ENCODE measurements at regions of chr6 and their contacts with region 1.

Region 1: DNA sequence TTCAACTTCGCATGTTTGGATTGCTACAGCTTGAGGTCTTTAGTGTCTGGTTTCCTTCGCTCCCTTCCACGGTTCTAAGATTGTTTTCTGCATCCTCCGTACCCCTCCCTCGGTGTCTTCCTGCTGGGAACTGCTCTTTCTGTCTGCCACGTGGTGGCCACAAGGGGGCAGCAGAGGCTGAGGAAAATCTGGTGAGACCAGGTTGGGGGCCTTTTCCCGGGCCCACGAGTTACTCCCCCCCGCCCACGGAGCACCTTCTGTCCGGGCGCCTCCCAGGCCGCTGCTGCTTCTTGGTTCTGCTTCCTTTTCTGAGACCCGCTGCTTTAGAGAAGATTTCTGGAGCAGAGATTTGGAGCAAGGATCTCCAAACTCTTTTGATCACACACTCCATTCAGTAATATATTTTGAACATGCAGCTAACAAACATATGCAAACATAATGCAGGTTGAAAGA is 21.1 kb upstream of the NOTCH4 start:
- DNase-seq: peak; percentile 63
- ATAC-seq: peak; percentile 97
- H3K4me3 ChIP-seq: no peak overlapping the region
- H3K27ac ChIP-seq: no peak overlapping the region
- H3K4me1 ChIP-seq: no peaks in the 10 kb centered on the region
- H3K27me3 ChIP-seq: peaks cover 9% of the 10 kb centered on the region
- CTCF ChIP-seq: peak; percentile 80
- POLR2A ChIP-seq: no peak
- RAD21 ChIP-seq: peak; percentile 71

Region 2: GRCh38 chr6:32118782-32119628 is 126.0 kb before region 1 on chr6:
- CTCF ChIA-PET with region 1: no interaction called
- POLR2A ChIA-PET with region 1: no interaction called
- dilution Hi-C with region 1: no loop called
- in situ Hi-C with region 1: no loop called
- intact Hi-C with region 1: loop called (anchors 2 kb)
- DNase-seq: peak; percentile 85
- ATAC-seq: peak; percentile 78
- H3K4me3 ChIP-seq: no peak overlapping the region
- H3K27ac ChIP-seq: peak overlapping the region; percentile 36; the same call in 1 of the 2 replicates
- H3K4me1 ChIP-seq: peaks cover 11% of the 10 kb centered on the region
- H3K27me3 ChIP-seq: no peaks in the 10 kb centered on the region
- CTCF ChIP-seq: peak; percentile 98
- POLR2A ChIP-seq: peak; percentile 57; the same call in 1 of the 2 replicates
- RAD21 ChIP-seq: peak; percentile 98

Region 3: DNA sequence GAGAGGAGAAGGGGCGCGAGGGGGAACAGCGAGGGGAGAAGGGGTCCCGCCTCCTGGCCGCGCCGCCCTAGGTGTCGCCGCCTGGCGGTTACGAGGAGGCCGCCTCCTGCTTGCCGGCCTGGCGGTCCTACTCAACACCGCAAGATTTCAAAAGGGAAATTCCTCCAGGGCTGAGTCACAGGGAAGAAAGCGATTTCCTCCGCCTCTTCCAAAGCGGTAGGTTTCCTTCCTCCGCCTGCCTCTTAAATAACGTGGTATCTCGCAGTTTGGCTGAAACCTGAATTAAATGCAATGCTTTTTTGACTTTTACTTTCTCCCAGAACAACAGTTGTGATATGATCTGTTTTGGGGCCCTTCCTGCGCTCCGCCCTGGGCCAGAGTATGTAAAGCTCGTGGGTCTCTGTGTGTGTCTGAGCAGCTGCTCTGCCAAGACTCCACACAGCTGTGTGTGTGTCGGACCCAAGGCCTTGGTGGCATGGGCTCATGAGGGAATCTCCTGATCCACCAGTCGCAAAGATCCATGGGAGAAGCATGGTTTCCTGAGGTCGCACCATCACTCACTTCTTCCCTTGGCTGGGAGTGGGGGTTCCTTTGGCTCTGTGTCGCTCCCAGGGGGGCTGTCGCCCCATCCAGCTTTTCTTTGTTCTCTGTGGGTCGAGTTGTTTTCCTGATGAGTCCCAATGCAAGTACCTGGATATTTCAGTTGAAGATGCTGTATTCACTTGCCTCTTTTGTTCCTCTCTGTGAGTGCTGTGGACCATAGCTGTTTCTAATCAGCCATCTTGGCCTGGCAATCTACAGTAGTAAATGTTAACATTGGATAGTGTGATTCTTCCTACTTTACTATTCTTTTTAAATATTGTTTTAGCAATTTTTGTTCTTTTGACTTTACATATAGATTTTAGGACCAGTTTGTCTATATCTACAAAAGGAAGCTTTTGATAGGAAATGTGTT is 10.5 kb after region 1 on chr6:
- CTCF ChIA-PET with region 1: interaction called, 10 read pairs
- POLR2A ChIA-PET with region 1: no interaction called
- dilution Hi-C with region 1: no loop called
- in situ Hi-C with region 1: no loop called
- intact Hi-C with region 1: no loop called
- DNase-seq: peak; percentile 93
- ATAC-seq: peak; percentile 97
- H3K4me3 ChIP-seq: peak overlapping the region; percentile 20
- H3K27ac ChIP-seq: peak overlapping the region; percentile 81
- H3K4me1 ChIP-seq: peaks cover 4% of the 10 kb centered on the region
- H3K27me3 ChIP-seq: no peaks in the 10 kb centered on the region
- CTCF ChIP-seq: peak; percentile 62
- POLR2A ChIP-seq: 0 out of 2 replicates have a peak, but pooled peaks have one; percentile 25
- RAD21 ChIP-seq: peak; percentile 37; the same call in 1 of the 2 replicates

Region 4: DNA sequence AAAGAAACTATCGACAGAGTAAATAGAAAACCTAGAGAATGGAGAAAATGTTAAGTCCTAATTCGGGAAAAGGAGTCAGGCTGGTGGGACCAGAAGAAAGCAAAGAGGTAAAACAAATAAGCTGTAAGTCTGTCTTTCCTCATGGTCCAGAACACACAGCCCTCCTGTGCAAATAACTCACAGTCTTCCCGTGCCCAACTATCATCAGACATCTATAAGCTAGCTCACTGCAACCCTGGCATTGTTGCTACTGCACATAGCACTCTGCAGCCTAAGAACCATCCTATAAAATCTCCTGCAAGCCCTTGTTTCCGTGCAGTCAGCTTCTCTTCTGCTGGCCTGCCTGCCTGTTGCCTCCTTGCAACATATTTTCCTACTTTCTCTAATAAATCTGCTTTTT is 212.1 kb after region 1 on chr6:
- CTCF ChIA-PET with region 1: no interaction called
- POLR2A ChIA-PET with region 1: no interaction called
- dilution Hi-C with region 1: no loop called
- in situ Hi-C with region 1: no loop called
- intact Hi-C with region 1: no loop called
- DNase-seq: no peak
- ATAC-seq: no peak
- H3K4me3 ChIP-seq: no peak overlapping the region
- H3K27ac ChIP-seq: no peak overlapping the region
- H3K4me1 ChIP-seq: no peaks in the 10 kb centered on the region
- H3K27me3 ChIP-seq: no peaks in the 10 kb centered on the region
- CTCF ChIP-seq: no peak
- POLR2A ChIP-seq: no peak
- RAD21 ChIP-seq: no peak

Region 5: GRCh38 chr6:32692019-32692418 is 447.0 kb after region 1 on chr6:
- CTCF ChIA-PET with region 1: no interaction called
- POLR2A ChIA-PET with region 1: no interaction called
- dilution Hi-C with region 1: no loop called
- in situ Hi-C with region 1: loop called (anchors 10 kb)
- intact Hi-C with region 1: no loop called
- DNase-seq: no peak
- ATAC-seq: no peak
- H3K4me3 ChIP-seq: no peak overlapping the region
- H3K27ac ChIP-seq: no peak overlapping the region
- H3K4me1 ChIP-seq: no peaks in the 10 kb centered on the region
- H3K27me3 ChIP-seq: no peaks in the 10 kb centered on the region
- CTCF ChIP-seq: no peak
- POLR2A ChIP-seq: no peak
- RAD21 ChIP-seq: no peak

Region 6: GRCh38 chr6:32785781-32786533 is 541.0 kb after region 1 on chr6:
- CTCF ChIA-PET with region 1: interaction called, 3 read pairs
- POLR2A ChIA-PET with region 1: no interaction called
- dilution Hi-C with region 1: no loop called
- in situ Hi-C with region 1: loop called (anchors 10 kb)
- intact Hi-C with region 1: loop called (anchors 5 kb)
- DNase-seq: peak; percentile 49
- ATAC-seq: peak; percentile 81
- H3K4me3 ChIP-seq: no peak overlapping the region
- H3K27ac ChIP-seq: no peak overlapping the region
- H3K4me1 ChIP-seq: no peaks in the 10 kb centered on the region
- H3K27me3 ChIP-seq: peaks cover 4% of the 10 kb centered on the region
- CTCF ChIP-seq: peak; percentile 53
- POLR2A ChIP-seq: no peak
- RAD21 ChIP-seq: peak; percentile 44